Endothelial cell of umbilical vein (primary cell): ENCODE measurements at regions of chr10 and their contacts with region 1.

Region 1: DNA sequence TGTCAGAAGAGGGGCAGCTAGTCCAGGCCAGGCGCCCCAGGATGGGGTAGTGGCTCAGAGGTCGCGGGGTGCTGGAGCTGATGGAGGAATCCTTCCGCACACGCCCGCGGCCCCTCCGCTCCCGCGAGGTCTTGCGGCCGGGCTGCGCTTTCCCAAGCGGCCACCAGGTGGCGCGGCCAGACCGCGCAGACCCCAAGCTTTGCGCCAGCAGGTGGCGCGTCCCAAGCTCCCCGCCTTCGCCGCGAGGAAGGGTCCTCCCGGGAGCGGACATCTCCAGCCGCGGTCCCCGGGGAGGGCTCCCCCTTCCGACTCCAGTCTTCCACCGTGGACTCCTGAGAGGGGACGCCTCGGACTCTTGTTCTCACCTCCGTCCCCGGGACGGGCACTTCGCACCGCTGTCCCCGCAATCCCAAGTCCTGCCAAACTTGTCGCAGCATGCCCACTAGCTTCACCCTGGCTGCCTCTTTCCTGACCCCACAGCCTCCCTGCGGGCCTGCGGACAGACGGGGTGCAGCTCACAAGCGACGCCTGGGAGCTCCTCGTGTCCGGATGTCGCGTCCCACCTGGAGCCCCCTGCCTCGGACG is 19.4 kb downstream of the KCNK18 start:
- DNase-seq: peak; percentile 59
- H3K4me3 ChIP-seq: peak overlapping the region in 2 of 3 experiments; percentile 41 to 50
- H3K27ac ChIP-seq: no peak overlapping the region
- H3K4me1 ChIP-seq: peaks cover 5% of the 10 kb centered on the region
- H3K27me3 ChIP-seq: peaks cover 1 to 7% of the 10 kb centered on the region in 2 experiments
- CTCF ChIP-seq: peak; percentile 99 to 100
- POLR2A ChIP-seq: no peak

Region 2: DNA sequence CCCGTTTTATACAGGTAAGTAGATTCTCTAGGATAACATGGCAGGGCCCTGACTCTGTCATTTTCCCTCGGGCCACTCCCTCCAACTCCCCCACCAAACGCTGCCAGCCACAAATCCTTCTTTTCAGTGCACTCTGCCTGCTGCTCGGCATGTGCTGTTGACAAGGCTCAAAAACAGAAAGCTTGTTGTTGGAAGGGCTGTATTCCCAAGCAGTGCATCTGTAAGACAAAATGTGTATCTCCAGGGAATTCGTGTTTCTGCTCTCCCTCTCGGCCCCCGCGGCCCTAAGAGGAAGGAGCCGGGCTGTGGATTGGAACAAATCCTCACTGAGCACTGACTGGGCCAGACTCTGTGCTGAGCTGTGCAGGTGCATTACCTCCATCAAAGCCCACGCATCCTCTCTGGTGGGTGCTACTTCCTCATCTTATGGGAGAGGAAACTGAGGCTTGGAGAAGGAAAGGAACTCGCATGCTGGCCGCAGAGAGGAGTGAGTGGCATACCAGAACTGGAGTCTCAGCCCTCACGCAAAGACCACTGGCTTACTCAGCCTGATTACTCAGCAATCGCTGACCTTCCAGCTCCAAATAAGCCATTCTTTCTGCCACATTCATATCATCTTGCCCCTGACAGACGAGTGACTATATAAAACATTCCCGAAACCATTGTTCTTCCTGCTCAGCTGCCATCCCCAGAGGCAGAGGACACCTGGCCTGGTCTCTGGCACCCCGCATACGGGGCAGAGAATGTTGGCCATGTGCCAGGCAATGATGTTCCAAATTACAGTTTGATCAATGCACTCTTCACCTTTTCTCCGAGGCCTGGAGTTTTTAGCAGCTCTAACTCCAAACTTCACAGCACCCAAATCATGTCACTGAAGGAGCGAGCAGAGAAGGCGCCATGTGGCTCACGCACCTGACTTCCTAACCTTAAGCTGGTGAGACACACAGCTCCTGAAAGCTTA is 400.8 kb before region 1 on chr10:
- CTCF ChIA-PET with region 1: no interaction called
- POLR2A ChIA-PET with region 1: no interaction called
- dilution Hi-C with region 1: no loop called
- intact Hi-C with region 1: no loop called
- DNase-seq: no peak
- H3K4me3 ChIP-seq: no peak overlapping the region
- H3K27ac ChIP-seq: no peak overlapping the region
- H3K4me1 ChIP-seq: no peaks in the 10 kb centered on the region
- H3K27me3 ChIP-seq: no peaks in the 10 kb centered on the region
- CTCF ChIP-seq: no peak
- POLR2A ChIP-seq: no peak

Region 3: GRCh38 chr10:117204316-117204715 is 12.4 kb before region 1 on chr10:
- CTCF ChIA-PET with region 1: interaction called, 16 read pairs
- POLR2A ChIA-PET with region 1: no interaction called
- dilution Hi-C with region 1: no loop called
- intact Hi-C with region 1: no loop called
- DNase-seq: no peak
- H3K4me3 ChIP-seq: no peak overlapping the region
- H3K27ac ChIP-seq: no peak overlapping the region
- H3K4me1 ChIP-seq: no peaks in the 10 kb centered on the region
- H3K27me3 ChIP-seq: no peaks in the 10 kb centered on the region
- CTCF ChIP-seq: no peak
- POLR2A ChIP-seq: no peak

Region 4: GRCh38 chr10:117241541-117242462 is 25.1 kb after region 1 on chr10:
- CTCF ChIA-PET with region 1: interaction called, 14 read pairs
- POLR2A ChIA-PET with region 1: no interaction called
- dilution Hi-C with region 1: no loop called
- intact Hi-C with region 1: no loop called
- DNase-seq: no peak
- H3K4me3 ChIP-seq: no peak overlapping the region
- H3K27ac ChIP-seq: no peak overlapping the region
- H3K4me1 ChIP-seq: no peaks in the 10 kb centered on the region
- H3K27me3 ChIP-seq: peaks cover 14 to 27% of the 10 kb centered on the region in 2 experiments
- CTCF ChIP-seq: no peak
- POLR2A ChIP-seq: no peak

Region 5: DNA sequence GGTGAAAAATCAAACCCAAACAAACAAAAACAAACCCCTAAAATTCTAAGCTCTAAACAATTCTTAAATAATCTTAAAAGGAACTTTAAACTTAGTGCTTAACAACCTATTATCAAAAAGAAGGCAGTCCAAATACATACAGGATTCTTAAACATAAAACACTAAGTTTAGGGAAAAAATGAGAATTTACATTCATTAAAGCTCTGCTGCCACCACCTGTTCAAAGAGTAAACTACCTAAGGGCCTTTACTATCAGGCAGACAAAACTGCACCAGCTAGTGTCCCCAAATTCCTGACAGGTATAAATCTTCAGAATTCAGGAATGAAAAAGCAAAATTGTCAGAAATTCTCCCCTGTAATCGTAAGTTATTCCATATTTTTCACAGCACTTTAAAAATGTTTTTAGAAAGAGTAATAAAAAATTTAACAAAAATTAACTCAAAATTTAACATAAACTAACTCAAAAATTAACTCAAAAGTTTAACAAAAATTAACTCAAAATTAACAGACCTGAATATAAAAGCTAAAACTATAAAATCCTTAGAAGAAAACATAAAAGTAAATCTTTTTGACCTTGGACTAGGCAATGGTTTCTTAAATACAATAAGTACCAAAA is 103.5 kb after region 1 on chr10:
- CTCF ChIA-PET with region 1: interaction called, 240 read pairs
- POLR2A ChIA-PET with region 1: no interaction called
- dilution Hi-C with region 1: no loop called
- intact Hi-C with region 1: loop called (anchors 1 kb)
- DNase-seq: peak; percentile 37
- H3K4me3 ChIP-seq: no peak overlapping the region
- H3K27ac ChIP-seq: no peak overlapping the region
- H3K4me1 ChIP-seq: no peaks in the 10 kb centered on the region
- H3K27me3 ChIP-seq: no peaks in the 10 kb centered on the region
- CTCF ChIP-seq: peak; percentile 32 to 39
- POLR2A ChIP-seq: no peak

Region 6: DNA sequence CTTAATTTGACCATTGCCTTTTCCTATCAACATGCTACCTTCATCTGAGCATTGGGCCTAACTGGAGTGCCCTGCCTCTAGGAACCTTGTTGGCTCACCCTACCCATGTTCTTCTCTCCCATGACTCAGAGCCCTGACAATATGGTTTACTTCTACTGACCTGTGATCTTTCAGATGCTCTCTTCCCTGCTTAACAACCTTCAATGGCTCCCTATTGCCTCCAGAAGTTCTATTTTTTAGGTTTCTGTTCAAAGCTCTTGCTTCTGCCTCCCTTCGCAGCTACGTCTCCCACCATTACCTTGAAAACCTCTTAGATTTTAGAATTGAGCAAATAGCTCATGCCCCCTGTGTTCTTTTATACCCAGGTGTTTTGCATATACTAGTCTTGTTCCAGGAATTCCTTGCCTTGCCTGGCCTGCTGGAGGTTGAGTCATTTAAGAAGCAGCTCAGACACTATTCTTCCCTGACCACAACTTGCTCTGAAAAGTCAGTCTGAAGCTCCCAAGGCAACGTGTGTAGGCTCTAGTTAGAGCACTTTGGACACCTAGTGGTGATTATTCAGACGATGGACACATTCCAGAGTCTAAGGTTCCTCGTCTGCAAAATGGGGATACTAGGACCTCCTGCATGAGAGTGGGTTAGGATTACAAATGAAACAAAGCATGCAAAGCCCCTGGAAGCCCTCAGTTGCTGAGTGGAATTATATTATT is 261.4 kb after region 1 on chr10:
- CTCF ChIA-PET with region 1: interaction called, 20 read pairs
- POLR2A ChIA-PET with region 1: no interaction called
- dilution Hi-C with region 1: no loop called
- intact Hi-C with region 1: loop called (anchors 5 kb)
- DNase-seq: peak; percentile 44
- H3K4me3 ChIP-seq: no peak overlapping the region
- H3K27ac ChIP-seq: no peak overlapping the region
- H3K4me1 ChIP-seq: no peaks in the 10 kb centered on the region
- H3K27me3 ChIP-seq: peaks cover 2 to 6% of the 10 kb centered on the region in 2 experiments
- CTCF ChIP-seq: peak in 1 of 2 donors; percentile 18
- POLR2A ChIP-seq: no peak

Region 7: GRCh38 chr10:118112543-118113125 is 895.9 kb after region 1 on chr10:
- CTCF ChIA-PET with region 1: no interaction called
- POLR2A ChIA-PET with region 1: no interaction called
- dilution Hi-C with region 1: no loop called
- intact Hi-C with region 1: no loop called
- DNase-seq: no peak
- H3K4me3 ChIP-seq: no peak overlapping the region
- H3K27ac ChIP-seq: no peak overlapping the region
- H3K4me1 ChIP-seq: no peaks in the 10 kb centered on the region
- H3K27me3 ChIP-seq: no peaks in the 10 kb centered on the region
- CTCF ChIP-seq: no peak
- POLR2A ChIP-seq: no peak

Region 8: DNA sequence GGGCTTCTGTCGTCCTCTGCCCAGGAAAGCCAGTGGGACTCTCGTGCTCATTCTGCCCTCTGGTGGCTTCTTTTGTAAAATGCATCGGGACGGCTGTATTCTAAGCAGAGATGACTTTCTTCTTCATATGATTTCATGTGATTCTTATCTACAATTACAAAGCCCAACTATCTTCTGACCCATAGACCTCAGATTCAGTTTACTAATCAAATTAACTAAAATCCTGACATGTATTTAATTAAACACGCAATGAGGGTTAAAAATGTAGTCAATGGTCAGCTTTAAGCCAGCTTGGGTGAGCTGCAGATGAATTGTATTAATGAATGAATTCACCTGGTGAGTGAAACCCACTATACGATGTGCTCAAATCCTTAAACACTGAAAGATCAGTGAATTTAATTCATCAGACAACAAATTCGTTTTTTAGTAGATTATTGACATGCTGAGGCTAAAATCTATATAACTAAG is 1243.1 kb after region 1 on chr10:
- CTCF ChIA-PET with region 1: interaction called, 17 read pairs
- POLR2A ChIA-PET with region 1: no interaction called
- dilution Hi-C with region 1: no loop called
- intact Hi-C with region 1: no loop called
- DNase-seq: peak; percentile 68
- H3K4me3 ChIP-seq: no peak overlapping the region
- H3K27ac ChIP-seq: no peak overlapping the region
- H3K4me1 ChIP-seq: no peaks in the 10 kb centered on the region
- H3K27me3 ChIP-seq: no peaks in the 10 kb centered on the region
- CTCF ChIP-seq: peak; percentile 67 to 80
- POLR2A ChIP-seq: no peak